Activated CD8-positive, alpha-beta T cell treated with anti-CD3 and anti-CD28 coated beads for 36 hours (primary cell): ENCODE measurements at regions of chr6 and their contacts with region 1.

Region 1: GRCh38 chr6:4135665-4136353 is 434 bp upstream of the ECI2 start:
- DNase-seq: peak; percentile 97
- ATAC-seq: peak; percentile 95
- H3K4me3 Mint-ChIP-seq: peak overlapping the region; percentile 72
- H3K27ac Mint-ChIP-seq: peak overlapping the region; percentile 80
- H3K4me1 Mint-ChIP-seq: peaks cover 52% of the 10 kb centered on the region
- H3K27me3 Mint-ChIP-seq: no peaks in the 10 kb centered on the region
- CTCF ChIP-seq: no peak

Region 2: GRCh38 chr6:4018172-4018905 is 117.5 kb before region 1 on chr6:
- CTCF ChIA-PET with region 1: interaction called, 6 read pairs
- POLR2A ChIA-PET with region 1: interaction called, 50 read pairs
- intact Hi-C with region 1: loop called (anchors 5 kb)
- DNase-seq: peak; percentile 99
- ATAC-seq: peak; percentile 69
- H3K4me3 Mint-ChIP-seq: peak overlapping the region; percentile 86
- H3K27ac Mint-ChIP-seq: peak overlapping the region; percentile 97
- H3K4me1 Mint-ChIP-seq: peaks cover 41% of the 10 kb centered on the region
- H3K27me3 Mint-ChIP-seq: no peaks in the 10 kb centered on the region
- CTCF ChIP-seq: no peak

Region 3: GRCh38 chr6:4055420-4056041 is 80.3 kb before region 1 on chr6:
- CTCF ChIA-PET with region 1: interaction called, 6 read pairs
- POLR2A ChIA-PET with region 1: interaction called, 3 read pairs
- intact Hi-C with region 1: loop called (anchors 5 kb)
- DNase-seq: no peak
- ATAC-seq: no peak
- H3K4me3 Mint-ChIP-seq: no peak overlapping the region
- H3K27ac Mint-ChIP-seq: no peak overlapping the region
- H3K4me1 Mint-ChIP-seq: peaks cover 31% of the 10 kb centered on the region
- H3K27me3 Mint-ChIP-seq: no peaks in the 10 kb centered on the region
- CTCF ChIP-seq: no peak

Region 4: GRCh38 chr6:4155848-4156466 is 20.1 kb after region 1 on chr6:
- CTCF ChIA-PET with region 1: interaction called, 46 read pairs
- POLR2A ChIA-PET with region 1: interaction called, 6 read pairs
- intact Hi-C with region 1: no loop called
- DNase-seq: peak; percentile 91
- ATAC-seq: peak; percentile 100
- H3K4me3 Mint-ChIP-seq: no peak overlapping the region
- H3K27ac Mint-ChIP-seq: no peak overlapping the region
- H3K4me1 Mint-ChIP-seq: peaks cover 6% of the 10 kb centered on the region
- H3K27me3 Mint-ChIP-seq: peaks cover 6% of the 10 kb centered on the region
- CTCF ChIP-seq: peak; percentile 80